CD4-positive, alpha-beta T cell (primary cell): ENCODE measurements at regions of chr11 and their contacts with region 1.

Region 1: DNA sequence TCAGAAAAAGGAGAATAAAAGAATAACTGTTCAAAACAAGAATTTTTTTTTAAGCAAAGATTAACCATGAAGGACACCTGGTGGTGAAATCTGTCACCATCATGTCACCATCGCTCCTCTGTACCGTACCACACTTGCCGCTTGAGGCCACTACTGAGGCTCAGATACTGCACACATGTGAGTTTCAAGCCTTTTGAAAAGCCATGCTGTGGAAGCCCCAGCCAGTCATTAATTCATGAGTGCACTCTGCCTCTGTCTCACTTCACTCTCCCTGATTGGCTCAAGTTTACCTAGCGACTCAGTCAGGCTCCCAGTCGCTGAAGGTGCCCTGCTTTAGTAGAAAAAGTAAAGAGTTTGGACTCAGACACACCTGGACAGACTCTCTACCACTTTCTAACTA is 6.6 kb upstream of the MS4A12 start:
- DNase-seq: peak in 3 of 14 experiments; percentile 36 to 50 (median 38)
- ATAC-seq: peak; percentile 34
- H3K4me3 ChIP-seq: no peak overlapping the region
- H3K4me3 Mint-ChIP-seq: no peak overlapping the region
- H3K27ac ChIP-seq: no peak overlapping the region
- H3K27ac Mint-ChIP-seq: no peak overlapping the region
- H3K4me1 ChIP-seq: no peaks in the 10 kb centered on the region
- H3K4me1 Mint-ChIP-seq: peaks cover 4% of the 10 kb centered on the region
- H3K27me3 ChIP-seq: no peaks in the 10 kb centered on the region
- H3K27me3 Mint-ChIP-seq: no peaks in the 10 kb centered on the region
- CTCF ChIP-seq: no peak

Region 2: GRCh38 chr11:60363542-60364510 is 122.2 kb before region 1 on chr11:
- CTCF ChIA-PET with region 1: no interaction called
- POLR2A ChIA-PET with region 1: no interaction called
- intact Hi-C with region 1: loop called (anchors 5 kb)
- DNase-seq: peak; percentile 6 to 77 (median 38)
- ATAC-seq: peak; percentile 37
- H3K4me3 ChIP-seq: no peak overlapping the region
- H3K4me3 Mint-ChIP-seq: no peak overlapping the region
- H3K27ac ChIP-seq: no peak overlapping the region
- H3K27ac Mint-ChIP-seq: no peak overlapping the region
- H3K4me1 ChIP-seq: no peaks in the 10 kb centered on the region
- H3K4me1 Mint-ChIP-seq: no peaks in the 10 kb centered on the region
- H3K27me3 ChIP-seq: peaks cover under 1 to 4% of the 10 kb centered on the region in 2 experiments
- H3K27me3 Mint-ChIP-seq: peaks cover 17% of the 10 kb centered on the region
- CTCF ChIP-seq: peak; percentile 87

Region 3: DNA sequence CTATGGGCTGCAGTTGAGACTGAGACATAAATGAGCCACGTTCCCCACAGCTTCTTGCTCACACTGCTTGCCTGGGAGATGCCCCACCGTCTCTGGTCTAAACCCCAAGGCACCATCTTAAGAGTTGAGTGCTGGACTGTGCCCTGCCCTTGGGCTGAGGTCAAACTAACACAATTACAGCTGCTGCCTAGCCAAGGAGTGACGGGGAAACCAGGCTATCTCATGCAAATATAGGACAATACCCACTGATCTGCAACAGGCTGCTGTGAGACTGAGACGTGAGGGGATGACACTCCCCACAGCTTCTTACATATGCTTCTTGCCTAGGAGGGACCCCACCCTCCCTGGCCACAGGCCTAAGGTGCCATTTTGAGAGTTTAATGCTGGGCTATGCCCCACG is 205.7 kb after region 1 on chr11:
- CTCF ChIA-PET with region 1: no interaction called
- POLR2A ChIA-PET with region 1: no interaction called
- intact Hi-C with region 1: no loop called
- DNase-seq: no peak
- ATAC-seq: no peak
- H3K4me3 ChIP-seq: no peak overlapping the region
- H3K4me3 Mint-ChIP-seq: no peak overlapping the region
- H3K27ac ChIP-seq: no peak overlapping the region
- H3K27ac Mint-ChIP-seq: no peak overlapping the region
- H3K4me1 ChIP-seq: no peaks in the 10 kb centered on the region
- H3K4me1 Mint-ChIP-seq: no peaks in the 10 kb centered on the region
- H3K27me3 ChIP-seq: peaks cover 0 to 2% of the 10 kb centered on the region in 2 experiments
- H3K27me3 Mint-ChIP-seq: peaks cover 16% of the 10 kb centered on the region
- CTCF ChIP-seq: no peak

Region 4: GRCh38 chr11:60743058-60743457 is 257.1 kb after region 1 on chr11:
- CTCF ChIA-PET with region 1: no interaction called
- POLR2A ChIA-PET with region 1: no interaction called
- intact Hi-C with region 1: no loop called
- DNase-seq: no peak
- ATAC-seq: no peak
- H3K4me3 ChIP-seq: no peak overlapping the region
- H3K4me3 Mint-ChIP-seq: no peak overlapping the region
- H3K27ac ChIP-seq: no peak overlapping the region
- H3K27ac Mint-ChIP-seq: no peak overlapping the region
- H3K4me1 ChIP-seq: no peaks in the 10 kb centered on the region
- H3K4me1 Mint-ChIP-seq: no peaks in the 10 kb centered on the region
- H3K27me3 ChIP-seq: peaks cover 0 to 3% of the 10 kb centered on the region in 2 experiments
- H3K27me3 Mint-ChIP-seq: peaks cover 25% of the 10 kb centered on the region
- CTCF ChIP-seq: no peak

Region 5: GRCh38 chr11:60906132-60906972 is 420.4 kb after region 1 on chr11 and contains the start of gene PRPF19:
- CTCF ChIA-PET with region 1: no interaction called
- POLR2A ChIA-PET with region 1: no interaction called
- intact Hi-C with region 1: no loop called
- DNase-seq: peak; percentile 97 to 100 (median 99)
- ATAC-seq: peak; percentile 93
- H3K4me3 ChIP-seq: peak within 1 kb of the TSS; percentile 66
- H3K4me3 Mint-ChIP-seq: peak within 1 kb of the TSS; percentile 93
- H3K27ac ChIP-seq: peak within 1 kb of the TSS; percentile 85 to 93
- H3K27ac Mint-ChIP-seq: peak within 1 kb of the TSS; percentile 96
- H3K4me1 ChIP-seq: peaks cover 42% of the 10 kb centered on the region
- H3K4me1 Mint-ChIP-seq: peaks cover 56% of the 10 kb centered on the region
- H3K27me3 ChIP-seq: no peaks in the 10 kb centered on the region
- H3K27me3 Mint-ChIP-seq: no peaks in the 10 kb centered on the region
- CTCF ChIP-seq: no peak
- total RNA-seq, gene PRPF19: 63.2 to 67.3 TPM